HepG2 (cell line): ENCODE measurements at regions of chr16 and their contacts with region 1.

Region 1: DNA sequence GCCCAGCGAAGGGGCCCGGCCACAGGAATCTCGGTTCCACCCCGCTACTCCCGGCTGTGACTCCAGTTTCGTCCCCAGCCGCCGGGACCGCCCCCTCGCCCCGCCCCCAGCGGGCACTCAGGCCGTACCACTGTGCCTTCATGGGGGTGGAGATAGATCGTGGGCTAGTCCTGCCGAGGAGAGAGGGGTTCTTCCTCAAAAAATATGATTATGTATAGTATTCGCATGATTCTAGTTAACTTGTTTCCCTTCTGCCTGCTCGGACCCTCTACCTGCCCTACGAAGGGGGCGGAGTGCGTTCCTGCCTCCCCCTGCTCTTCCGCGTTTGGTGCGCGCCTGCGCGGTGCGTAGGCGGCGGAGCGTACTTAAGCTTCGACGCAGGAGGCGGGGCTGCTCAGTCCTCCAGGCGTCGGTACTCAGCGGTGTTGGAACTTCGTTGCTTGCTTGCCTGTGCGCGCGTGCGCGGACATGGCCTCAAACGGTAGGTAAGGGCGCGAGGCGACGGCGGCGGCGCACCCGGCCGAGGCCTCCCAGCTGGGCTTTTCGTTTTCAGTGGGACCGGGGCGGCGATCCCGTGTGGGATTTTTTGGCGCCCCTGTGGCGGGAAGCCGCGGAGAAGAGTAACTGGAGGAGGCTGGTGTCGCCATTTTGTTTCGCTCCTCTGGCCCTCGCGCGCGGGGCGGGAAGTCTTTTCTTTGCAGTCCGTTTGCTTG is at the start of gene FUS:
- DNase-seq: peak; percentile 84
- ATAC-seq: peak; percentile 74
- H3K4me3 ChIP-seq: peak within 1 kb of the TSS; percentile 90 to 93 (median 93)
- H3K27ac ChIP-seq: peak within 1 kb of the TSS; percentile 94
- H3K4me1 ChIP-seq: peaks cover 50% of the 10 kb centered on the region
- H3K27me3 ChIP-seq: no peaks in the 10 kb centered on the region; a peak in 1 of 5 replicates
- CTCF ChIP-seq: peak; percentile 4
- EP300 ChIP-seq: peak in 1 of 2 experiments; percentile 28; a peak in 1 of 4 replicates
- POLR2A ChIP-seq: peak; percentile 99 to 100
- RAD21 ChIP-seq: 0 out of 2 replicates have a peak, but pooled peaks have one; percentile 27
- total RNA-seq, gene FUS: 64.8 and 68.1 TPM in 2 replicates

Region 2: DNA sequence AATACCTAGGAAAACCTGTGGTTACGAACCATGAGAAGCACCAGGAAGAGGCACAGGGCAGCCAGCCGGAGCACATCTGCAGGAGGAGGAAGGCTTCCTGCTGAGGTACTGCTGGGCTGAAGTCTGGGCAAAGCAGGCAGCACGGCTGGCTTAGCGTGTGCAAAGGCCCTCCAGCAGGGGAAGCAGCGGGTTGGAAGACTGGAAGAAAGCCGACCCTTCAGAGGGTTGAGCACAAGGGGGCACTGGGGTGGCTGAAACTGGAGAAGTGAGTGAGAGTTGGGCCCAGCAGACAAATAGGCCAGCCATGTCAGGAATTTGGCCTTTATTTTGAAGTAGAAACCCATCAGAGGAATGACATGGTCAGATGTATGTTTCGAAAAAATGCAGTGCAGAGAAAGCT is 207.0 kb before region 1 on chr16:
- CTCF ChIA-PET with region 1: no interaction called
- POLR2A ChIA-PET with region 1: no interaction called
- in situ Hi-C with region 1: no loop called
- intact Hi-C with region 1: no loop called
- DNase-seq: peak; percentile 38
- ATAC-seq: peak; percentile 64
- H3K4me3 ChIP-seq: no peak overlapping the region
- H3K27ac ChIP-seq: no peak overlapping the region
- H3K4me1 ChIP-seq: no peaks in the 10 kb centered on the region
- H3K27me3 ChIP-seq: no peaks in the 10 kb centered on the region
- CTCF ChIP-seq: no peak; the same call in 1 of the 2 replicates
- EP300 ChIP-seq: no peak
- POLR2A ChIP-seq: no peak
- RAD21 ChIP-seq: no peak

Region 3: DNA sequence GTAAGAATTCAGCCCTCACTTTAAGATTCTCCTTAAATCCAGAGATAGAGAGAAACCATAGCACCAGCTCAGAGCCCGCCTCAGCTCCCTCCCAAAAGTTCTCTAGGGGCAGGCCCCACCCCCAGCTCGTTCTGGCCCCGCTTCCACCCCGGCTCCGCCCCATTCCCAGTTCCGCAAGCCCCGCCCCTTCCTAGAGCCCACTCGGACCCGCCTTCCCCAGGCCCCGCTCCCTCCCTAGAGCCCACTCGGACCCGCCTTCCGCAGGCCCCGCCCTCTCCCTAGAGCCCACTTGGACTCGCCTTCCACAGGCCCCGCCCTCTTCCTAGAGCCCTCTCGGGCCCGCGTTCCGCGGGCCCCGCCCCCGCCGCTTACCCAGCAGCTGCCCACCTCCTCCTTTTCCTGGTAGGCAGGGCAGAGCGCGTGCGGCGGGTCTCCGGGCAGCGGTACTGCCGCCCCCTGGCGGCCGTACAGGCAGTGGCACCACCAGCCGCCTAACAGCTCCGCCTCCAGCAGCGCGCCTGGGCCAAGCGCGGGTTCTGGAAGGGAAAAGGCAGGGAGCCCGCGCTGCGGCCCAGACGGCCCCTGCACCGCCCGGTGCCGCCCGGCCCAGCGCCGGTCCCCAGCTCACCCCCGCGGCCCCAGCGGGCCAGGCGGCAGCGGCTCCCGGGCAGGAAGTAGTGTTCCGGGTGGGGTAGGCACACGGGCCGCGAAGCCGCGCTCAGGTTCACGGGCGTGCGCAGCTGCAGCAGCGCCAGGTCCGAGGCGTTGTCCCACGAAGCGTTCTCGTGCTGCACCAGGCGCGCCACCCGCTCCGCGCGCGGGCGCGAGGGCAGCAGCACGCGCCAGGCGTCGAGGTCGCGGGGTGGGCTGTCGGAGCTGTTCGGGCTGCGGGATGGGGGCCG is 37.5 kb before region 1 on chr16:
- CTCF ChIA-PET with region 1: no interaction called
- POLR2A ChIA-PET with region 1: interaction called, 65 read pairs
- in situ Hi-C with region 1: no loop called
- intact Hi-C with region 1: no loop called
- DNase-seq: peak; percentile 98
- ATAC-seq: peak; percentile 74
- H3K4me3 ChIP-seq: peak overlapping the region; percentile 39 to 77 (median 64)
- H3K27ac ChIP-seq: peak overlapping the region; percentile 80
- H3K4me1 ChIP-seq: peaks cover 65% of the 10 kb centered on the region
- H3K27me3 ChIP-seq: peaks cover 0 to 14% of the 10 kb centered on the region in 2 experiments; a peak in 3 of 5 replicates
- CTCF ChIP-seq: peak; percentile 98
- EP300 ChIP-seq: peak; percentile 26 to 27; a peak in 1 of 4 replicates
- POLR2A ChIP-seq: no peak
- RAD21 ChIP-seq: peak; percentile 99

Region 4: DNA sequence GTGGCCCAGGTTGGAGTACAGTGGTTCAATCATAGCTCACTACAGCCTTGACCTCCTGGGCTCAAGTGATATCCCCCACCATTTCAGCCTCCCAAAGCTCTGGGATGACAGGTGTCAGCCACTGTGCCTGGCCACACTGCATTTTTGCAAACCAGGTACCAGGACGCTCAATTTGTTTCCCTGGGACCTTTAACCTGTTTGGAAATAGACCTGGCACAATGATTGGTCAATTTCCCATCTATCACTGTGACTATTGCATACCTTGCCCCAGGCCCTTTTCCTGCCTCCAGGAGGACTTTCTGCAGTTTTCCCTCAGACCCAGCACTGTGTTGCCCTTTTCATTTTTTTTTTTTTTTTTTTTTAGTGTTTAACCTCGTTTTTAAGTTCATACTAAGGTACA is 11.1 kb before region 1 on chr16:
- CTCF ChIA-PET with region 1: no interaction called
- POLR2A ChIA-PET with region 1: interaction called, 13 read pairs
- in situ Hi-C with region 1: no loop called
- intact Hi-C with region 1: no loop called
- DNase-seq: peak; percentile 58
- ATAC-seq: peak; percentile 78
- H3K4me3 ChIP-seq: no peak overlapping the region
- H3K27ac ChIP-seq: peak overlapping the region; percentile 26
- H3K4me1 ChIP-seq: peaks cover 48% of the 10 kb centered on the region
- H3K27me3 ChIP-seq: 0 out of 5 replicates have a peak, but pooled peaks cover 0 to 5% of the 10 kb centered on the region in 2 experiments
- CTCF ChIP-seq: no peak
- EP300 ChIP-seq: no peak
- POLR2A ChIP-seq: no peak
- RAD21 ChIP-seq: no peak

Region 5: DNA sequence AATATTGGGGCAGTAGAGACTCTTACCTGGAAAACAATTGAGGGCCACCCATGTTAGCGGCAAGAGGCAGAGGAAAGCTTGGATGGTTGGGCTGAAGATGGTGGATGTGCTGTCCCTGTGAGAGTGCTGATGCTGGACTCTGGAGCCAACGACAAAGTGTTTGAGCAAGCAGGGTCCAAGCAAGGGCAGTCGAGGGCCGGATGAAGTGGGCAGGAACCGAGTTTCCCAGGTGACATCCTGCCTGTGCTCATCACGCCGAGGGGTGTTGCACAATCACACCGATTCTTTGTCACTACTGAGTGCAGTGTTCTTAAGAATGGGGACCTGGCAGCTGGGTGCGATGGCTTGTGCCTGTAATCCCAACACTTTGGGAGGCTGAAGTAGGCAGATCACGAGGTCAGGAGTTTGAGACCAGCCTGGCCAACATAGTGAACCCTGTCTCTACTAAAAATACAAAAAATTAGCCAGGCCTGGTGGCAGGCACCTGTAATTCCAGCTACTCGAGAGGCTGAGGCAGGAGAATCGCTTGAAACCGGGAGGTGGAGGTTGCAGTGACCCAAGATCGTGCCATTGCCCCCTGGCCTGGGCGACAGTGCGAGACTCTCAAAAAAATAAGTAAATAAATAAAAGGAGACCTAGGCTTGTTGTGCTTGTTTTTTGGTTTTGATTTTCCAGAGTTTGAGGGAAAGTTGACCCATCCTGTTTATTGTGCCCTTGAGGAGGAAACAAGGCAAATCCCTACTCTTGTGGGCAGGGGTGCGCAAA is 16.6 kb after region 1 on chr16:
- CTCF ChIA-PET with region 1: no interaction called
- POLR2A ChIA-PET with region 1: interaction called, 34 read pairs
- in situ Hi-C with region 1: no loop called
- intact Hi-C with region 1: no loop called
- DNase-seq: no peak
- ATAC-seq: peak; percentile 1
- H3K4me3 ChIP-seq: no peak overlapping the region
- H3K27ac ChIP-seq: no peak overlapping the region
- H3K4me1 ChIP-seq: peaks cover 25% of the 10 kb centered on the region
- H3K27me3 ChIP-seq: no peaks in the 10 kb centered on the region
- CTCF ChIP-seq: no peak
- EP300 ChIP-seq: no peak
- POLR2A ChIP-seq: peak; percentile 61 to 64; a peak in 3 of 4 replicates
- RAD21 ChIP-seq: peak; percentile 21; the same call in 1 of the 2 replicates

Region 6: GRCh38 chr16:31202414-31203375 is 22.8 kb after region 1 on chr16 and contains the start of gene PYCARD:
- CTCF ChIA-PET with region 1: no interaction called
- POLR2A ChIA-PET with region 1: interaction called, 34 read pairs
- in situ Hi-C with region 1: no loop called
- intact Hi-C with region 1: no loop called
- DNase-seq: no peak
- ATAC-seq: peak; percentile 23
- H3K4me3 ChIP-seq: peak within 1 kb of the TSS; percentile 61 to 77 (median 61)
- H3K27ac ChIP-seq: no peak within 1 kb of the TSS
- H3K4me1 ChIP-seq: peaks cover 57% of the 10 kb centered on the region
- H3K27me3 ChIP-seq: peaks cover 0 to 35% of the 10 kb centered on the region in 2 experiments; a peak in 4 of 5 replicates
- CTCF ChIP-seq: no peak
- EP300 ChIP-seq: no peak
- POLR2A ChIP-seq: peak in 1 of 2 experiments; percentile 38; a peak in 2 of 4 replicates
- RAD21 ChIP-seq: peak; percentile 19; the same call in 1 of the 2 replicates
- total RNA-seq, gene PYCARD: 4.4 and 4.8 TPM in 2 replicates

Region 7: DNA sequence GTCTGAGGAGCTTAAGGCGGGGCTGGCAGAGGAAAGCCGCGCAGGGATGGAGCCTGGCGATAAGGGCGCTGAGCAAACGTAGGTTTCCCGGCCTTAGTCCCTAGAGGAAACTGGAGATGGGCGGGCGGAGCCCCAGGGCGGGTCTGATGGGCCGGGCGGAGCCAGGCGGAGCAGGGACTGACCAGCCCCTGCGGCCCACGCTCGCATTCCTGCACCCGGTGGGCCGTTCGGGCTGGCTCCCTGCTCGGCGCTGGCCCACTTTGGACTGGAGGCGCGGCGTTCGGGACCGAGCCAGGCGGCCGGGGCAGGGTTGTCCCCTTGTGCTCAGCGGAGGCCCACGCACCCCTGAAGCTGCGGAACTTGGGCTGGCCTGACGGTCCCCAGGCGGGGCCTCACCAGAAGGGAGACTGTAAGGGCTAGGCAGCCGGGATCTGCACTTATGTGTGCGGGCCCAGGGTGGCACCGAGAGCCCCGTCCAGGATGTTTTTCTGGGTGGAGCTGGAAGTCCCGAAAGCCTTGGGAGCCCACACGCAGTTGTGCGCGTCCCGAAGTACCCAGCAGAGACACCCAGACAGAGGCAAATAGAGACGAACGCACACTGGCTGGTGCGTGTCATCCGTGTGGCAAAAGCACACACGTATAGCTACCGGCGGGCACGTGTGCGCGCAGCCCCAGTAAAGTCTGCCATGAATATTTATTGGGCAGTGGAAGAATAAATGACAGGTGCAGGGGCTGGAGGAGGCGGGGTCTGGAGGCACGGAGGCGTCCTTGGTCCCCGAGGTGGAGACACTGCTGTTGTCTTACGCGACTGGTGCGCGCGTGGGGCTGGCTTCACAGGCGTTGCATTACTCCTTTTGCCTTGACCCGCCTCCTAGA is 35.6 kb after region 1 on chr16:
- CTCF ChIA-PET with region 1: no interaction called
- POLR2A ChIA-PET with region 1: interaction called, 11 read pairs
- in situ Hi-C with region 1: no loop called
- intact Hi-C with region 1: no loop called
- DNase-seq: peak; percentile 39
- ATAC-seq: peak; percentile 94
- H3K4me3 ChIP-seq: peak overlapping the region; percentile 49 to 69 (median 50)
- H3K27ac ChIP-seq: no peak overlapping the region
- H3K4me1 ChIP-seq: peaks cover 12% of the 10 kb centered on the region
- H3K27me3 ChIP-seq: peaks cover 18 to 57% of the 10 kb centered on the region in 2 experiments
- CTCF ChIP-seq: no peak
- EP300 ChIP-seq: no peak
- POLR2A ChIP-seq: no peak
- RAD21 ChIP-seq: 0 out of 2 replicates have a peak, but pooled peaks have one; percentile 31

Region 8: GRCh38 chr16:31354394-31355291 is 174.7 kb after region 1 on chr16 and contains the start of gene ITGAX:
- CTCF ChIA-PET with region 1: no interaction called
- POLR2A ChIA-PET with region 1: no interaction called
- in situ Hi-C with region 1: no loop called
- intact Hi-C with region 1: no loop called
- DNase-seq: no peak
- ATAC-seq: no peak
- H3K4me3 ChIP-seq: no peak within 1 kb of the TSS
- H3K27ac ChIP-seq: no peak within 1 kb of the TSS
- H3K4me1 ChIP-seq: no peaks in the 10 kb centered on the region
- H3K27me3 ChIP-seq: peaks cover 10 to 39% of the 10 kb centered on the region in 2 experiments; a peak in 4 of 5 replicates
- CTCF ChIP-seq: no peak
- EP300 ChIP-seq: no peak
- POLR2A ChIP-seq: no peak
- RAD21 ChIP-seq: no peak
- total RNA-seq, gene ITGAX: not detected in 2 replicates